ENCODE measurements at regions of chr16 and their contacts with region 1.

Region 1: GRCh38 chr16:15643048-15643945 is at the start of gene MARF1:
- DNase-seq: peak; percentile 98 to 100 (median 100)
- ATAC-seq: peak; percentile 77
- H3K4me3 ChIP-seq: peak within 1 kb of the TSS; percentile 80
- H3K4me3 Mint-ChIP-seq: peak within 1 kb of the TSS; percentile 96
- H3K27ac ChIP-seq: peak within 1 kb of the TSS; percentile 96 to 99
- H3K27ac Mint-ChIP-seq: peak within 1 kb of the TSS; percentile 98
- H3K4me1 ChIP-seq: peaks cover 32% of the 10 kb centered on the region
- H3K4me1 Mint-ChIP-seq: peaks cover 49% of the 10 kb centered on the region
- H3K27me3 ChIP-seq: no peaks in the 10 kb centered on the region
- H3K27me3 Mint-ChIP-seq: no peaks in the 10 kb centered on the region
- CTCF ChIP-seq: peak; percentile 56
- total RNA-seq, gene MARF1: 156 to 157 TPM

Region 2: GRCh38 chr16:15427648-15428239 is 215.6 kb before region 1 on chr16:
- CTCF ChIA-PET with region 1: interaction called, 13 read pairs
- POLR2A ChIA-PET with region 1: interaction called, 3 read pairs
- intact Hi-C with region 1: loop called in 1 of 2 experiments (anchors 5 kb)
- DNase-seq: peak; percentile 33 to 71 (median 54)
- ATAC-seq: no peak
- H3K4me3 ChIP-seq: no peak overlapping the region
- H3K4me3 Mint-ChIP-seq: no peak overlapping the region
- H3K27ac ChIP-seq: no peak overlapping the region
- H3K27ac Mint-ChIP-seq: no peak overlapping the region
- H3K4me1 ChIP-seq: no peaks in the 10 kb centered on the region
- H3K4me1 Mint-ChIP-seq: no peaks in the 10 kb centered on the region
- H3K27me3 ChIP-seq: no peaks in the 10 kb centered on the region
- H3K27me3 Mint-ChIP-seq: peaks cover 9% of the 10 kb centered on the region
- CTCF ChIP-seq: peak; percentile 60

Region 3: GRCh38 chr16:15466886-15467781 is 176.2 kb before region 1 on chr16:
- CTCF ChIA-PET with region 1: no interaction called
- POLR2A ChIA-PET with region 1: no interaction called
- intact Hi-C with region 1: no loop called
- DNase-seq: peak in 1 of 14 experiments; percentile 12
- ATAC-seq: no peak
- H3K4me3 ChIP-seq: no peak overlapping the region
- H3K4me3 Mint-ChIP-seq: no peak overlapping the region
- H3K27ac ChIP-seq: no peak overlapping the region
- H3K27ac Mint-ChIP-seq: no peak overlapping the region
- H3K4me1 ChIP-seq: no peaks in the 10 kb centered on the region
- H3K4me1 Mint-ChIP-seq: no peaks in the 10 kb centered on the region
- H3K27me3 ChIP-seq: no peaks in the 10 kb centered on the region
- H3K27me3 Mint-ChIP-seq: peaks cover 8% of the 10 kb centered on the region
- CTCF ChIP-seq: no peak

Region 4: GRCh38 chr16:15618392-15618791 is 24.9 kb before region 1 on chr16:
- CTCF ChIA-PET with region 1: interaction called, 6 read pairs
- POLR2A ChIA-PET with region 1: interaction called, 10 read pairs
- intact Hi-C with region 1: no loop called
- DNase-seq: no peak
- ATAC-seq: no peak
- H3K4me3 ChIP-seq: no peak overlapping the region
- H3K4me3 Mint-ChIP-seq: no peak overlapping the region
- H3K27ac ChIP-seq: no peak overlapping the region
- H3K27ac Mint-ChIP-seq: no peak overlapping the region
- H3K4me1 ChIP-seq: no peaks in the 10 kb centered on the region
- H3K4me1 Mint-ChIP-seq: no peaks in the 10 kb centered on the region
- H3K27me3 ChIP-seq: no peaks in the 10 kb centered on the region
- H3K27me3 Mint-ChIP-seq: no peaks in the 10 kb centered on the region
- CTCF ChIP-seq: no peak

Region 5: GRCh38 chr16:15658149-15658548 is 14.9 kb after region 1 on chr16:
- CTCF ChIA-PET with region 1: interaction called, 11 read pairs
- POLR2A ChIA-PET with region 1: interaction called, 28 read pairs
- intact Hi-C with region 1: no loop called
- DNase-seq: no peak
- ATAC-seq: no peak
- H3K4me3 ChIP-seq: no peak overlapping the region
- H3K4me3 Mint-ChIP-seq: no peak overlapping the region
- H3K27ac ChIP-seq: peak overlapping the region in 1 of 2 donors; percentile 40
- H3K27ac Mint-ChIP-seq: peak overlapping the region; percentile 90
- H3K4me1 ChIP-seq: peaks cover 62% of the 10 kb centered on the region
- H3K4me1 Mint-ChIP-seq: peaks cover 70% of the 10 kb centered on the region
- H3K27me3 ChIP-seq: no peaks in the 10 kb centered on the region
- H3K27me3 Mint-ChIP-seq: no peaks in the 10 kb centered on the region
- CTCF ChIP-seq: no peak

Region 6: GRCh38 chr16:15682105-15682570 is 38.8 kb after region 1 on chr16:
- CTCF ChIA-PET with region 1: interaction called, 11 read pairs
- POLR2A ChIA-PET with region 1: interaction called, 3 read pairs
- intact Hi-C with region 1: no loop called
- DNase-seq: peak in 11 of 14 experiments; percentile 25 to 76 (median 36)
- ATAC-seq: peak; percentile 98
- H3K4me3 ChIP-seq: no peak overlapping the region
- H3K4me3 Mint-ChIP-seq: no peak overlapping the region
- H3K27ac ChIP-seq: no peak overlapping the region
- H3K27ac Mint-ChIP-seq: peak overlapping the region; percentile 69
- H3K4me1 ChIP-seq: no peaks in the 10 kb centered on the region
- H3K4me1 Mint-ChIP-seq: peaks cover 6% of the 10 kb centered on the region
- H3K27me3 ChIP-seq: no peaks in the 10 kb centered on the region
- H3K27me3 Mint-ChIP-seq: no peaks in the 10 kb centered on the region
- CTCF ChIP-seq: peak; percentile 0

Region 7: GRCh38 chr16:15888072-15888976 is 245.0 kb after region 1 on chr16 and contains the start of gene CEP20:
- CTCF ChIA-PET with region 1: no interaction called
- POLR2A ChIA-PET with region 1: interaction called, 8 read pairs
- intact Hi-C with region 1: loop called in 1 of 2 experiments (anchors 10 kb)
- DNase-seq: peak; percentile 99 to 100 (median 100)
- ATAC-seq: peak; percentile 97
- H3K4me3 ChIP-seq: peak within 1 kb of the TSS; percentile 88
- H3K4me3 Mint-ChIP-seq: peak within 1 kb of the TSS; percentile 99
- H3K27ac ChIP-seq: peak within 1 kb of the TSS; percentile 74 to 77
- H3K27ac Mint-ChIP-seq: peak within 1 kb of the TSS; percentile 91
- H3K4me1 ChIP-seq: peaks cover 24% of the 10 kb centered on the region
- H3K4me1 Mint-ChIP-seq: peaks cover 30% of the 10 kb centered on the region
- H3K27me3 ChIP-seq: no peaks in the 10 kb centered on the region
- H3K27me3 Mint-ChIP-seq: no peaks in the 10 kb centered on the region
- CTCF ChIP-seq: no peak
- total RNA-seq, gene CEP20: 14.4 to 15.5 TPM